PC-3 (cell line): ENCODE measurements at regions of chrX and their contacts with region 1.

Region 1: GRCh38 chrX:104310090-104310489 is 55.4 kb upstream of the ESX1 start:
- DNase-seq: peak; percentile 73
- ATAC-seq: peak; percentile 82
- H3K4me3 ChIP-seq: peak overlapping the region; percentile 56
- H3K27ac ChIP-seq: no peak overlapping the region
- H3K4me1 ChIP-seq: peaks cover 13% of the 10 kb centered on the region
- H3K27me3 ChIP-seq: no peaks in the 10 kb centered on the region
- CTCF ChIP-seq: peak; percentile 72

Region 2: DNA sequence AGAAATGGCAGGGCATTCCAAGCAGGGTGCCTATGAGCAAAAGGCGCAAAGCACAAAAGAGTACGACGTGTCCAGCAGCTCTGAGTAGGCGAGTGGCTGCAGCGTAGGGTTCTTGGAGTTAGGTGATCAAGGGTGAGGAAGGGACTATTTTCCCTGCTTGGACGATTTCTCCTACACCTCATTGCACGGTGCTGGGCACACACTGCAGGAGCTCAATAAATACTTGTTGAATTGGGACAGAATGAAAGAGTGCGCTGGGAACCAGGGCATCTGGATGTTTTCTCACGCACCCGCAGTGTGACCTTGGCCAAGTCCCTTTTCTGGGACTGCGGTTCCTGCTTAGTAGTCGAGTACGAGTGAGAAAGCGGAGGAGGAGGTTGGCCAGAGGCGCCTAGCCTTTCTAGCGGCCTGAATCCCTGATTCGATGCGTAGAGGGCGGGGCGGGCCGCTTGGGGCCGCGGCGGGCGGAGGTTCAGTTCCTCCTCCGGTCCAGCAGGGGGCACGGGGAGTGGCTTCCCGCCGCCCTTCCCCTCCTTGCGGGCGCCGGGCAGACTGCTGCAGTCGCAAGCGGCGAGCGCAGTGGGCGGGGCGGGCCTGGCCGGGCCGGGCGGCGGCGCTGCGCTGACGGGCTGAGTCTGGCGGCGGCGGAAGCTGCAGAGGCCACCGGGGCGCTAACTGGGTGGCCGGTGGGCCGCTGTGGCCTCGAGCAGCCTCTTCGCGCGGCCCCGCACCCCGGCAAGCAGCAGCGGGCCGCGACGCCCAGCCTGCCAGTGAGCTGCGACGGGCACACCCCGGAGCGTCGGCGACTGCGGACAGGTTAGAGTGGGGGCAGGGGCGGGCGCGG is 144.0 kb before region 1 on chrX and contains the start of gene FAM199X:
- CTCF ChIA-PET with region 1: no interaction called
- POLR2A ChIA-PET with region 1: no interaction called
- intact Hi-C with region 1: no loop called
- DNase-seq: peak; percentile 91
- ATAC-seq: peak; percentile 89
- H3K4me3 ChIP-seq: peak within 1 kb of the TSS; percentile 87
- H3K27ac ChIP-seq: peak within 1 kb of the TSS; percentile 60
- H3K4me1 ChIP-seq: peaks cover 18% of the 10 kb centered on the region
- H3K27me3 ChIP-seq: no peaks in the 10 kb centered on the region
- CTCF ChIP-seq: peak; percentile 57
- total RNA-seq, gene FAM199X: 25.9 and 26.0 TPM in 2 replicates

Region 3: GRCh38 chrX:104343428-104344129 is 33.5 kb after region 1 on chrX:
- CTCF ChIA-PET with region 1: no interaction called
- POLR2A ChIA-PET with region 1: no interaction called
- intact Hi-C with region 1: loop called (anchors 1 kb)
- DNase-seq: peak; percentile 94
- ATAC-seq: peak; percentile 93
- H3K4me3 ChIP-seq: no peak overlapping the region
- H3K27ac ChIP-seq: no peak overlapping the region
- H3K4me1 ChIP-seq: peaks cover 17% of the 10 kb centered on the region; the same call in 1 of the 2 replicates
- H3K27me3 ChIP-seq: no peaks in the 10 kb centered on the region
- CTCF ChIP-seq: peak; percentile 74

Region 4: GRCh38 chrX:104432256-104432655 is 122.2 kb after region 1 on chrX:
- CTCF ChIA-PET with region 1: no interaction called
- POLR2A ChIA-PET with region 1: no interaction called
- intact Hi-C with region 1: loop called (anchors 2 kb)
- DNase-seq: peak; percentile 70
- ATAC-seq: peak; percentile 85
- H3K4me3 ChIP-seq: no peak overlapping the region
- H3K27ac ChIP-seq: peak overlapping the region; percentile 73
- H3K4me1 ChIP-seq: peaks cover 32% of the 10 kb centered on the region
- H3K27me3 ChIP-seq: no peaks in the 10 kb centered on the region
- CTCF ChIP-seq: no peak

Region 5: DNA sequence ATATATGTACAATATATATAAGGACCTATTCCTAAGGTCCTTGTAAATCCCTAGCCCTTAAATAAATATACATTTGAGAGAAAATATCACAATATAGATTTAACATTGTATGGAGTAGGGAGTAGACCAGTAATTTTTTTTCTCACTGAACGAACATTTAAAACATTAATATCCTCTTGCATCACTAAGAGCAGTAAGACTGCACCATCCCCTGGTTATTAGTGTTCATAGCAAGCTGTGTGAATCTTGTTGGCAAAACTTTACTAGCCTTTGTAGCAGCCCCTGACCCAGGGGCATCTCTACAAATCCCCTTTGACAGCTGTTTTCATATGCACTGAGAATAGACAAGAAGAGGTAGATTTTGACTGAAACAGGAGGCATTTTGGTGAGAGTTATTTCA is 402.4 kb after region 1 on chrX:
- CTCF ChIA-PET with region 1: no interaction called
- POLR2A ChIA-PET with region 1: no interaction called
- intact Hi-C with region 1: loop called (anchors 1 kb)
- DNase-seq: peak; percentile 40
- ATAC-seq: peak; percentile 54
- H3K4me3 ChIP-seq: no peak overlapping the region
- H3K27ac ChIP-seq: no peak overlapping the region
- H3K4me1 ChIP-seq: peaks cover 15% of the 10 kb centered on the region
- H3K27me3 ChIP-seq: no peaks in the 10 kb centered on the region
- CTCF ChIP-seq: peak; percentile 47

Region 6: DNA sequence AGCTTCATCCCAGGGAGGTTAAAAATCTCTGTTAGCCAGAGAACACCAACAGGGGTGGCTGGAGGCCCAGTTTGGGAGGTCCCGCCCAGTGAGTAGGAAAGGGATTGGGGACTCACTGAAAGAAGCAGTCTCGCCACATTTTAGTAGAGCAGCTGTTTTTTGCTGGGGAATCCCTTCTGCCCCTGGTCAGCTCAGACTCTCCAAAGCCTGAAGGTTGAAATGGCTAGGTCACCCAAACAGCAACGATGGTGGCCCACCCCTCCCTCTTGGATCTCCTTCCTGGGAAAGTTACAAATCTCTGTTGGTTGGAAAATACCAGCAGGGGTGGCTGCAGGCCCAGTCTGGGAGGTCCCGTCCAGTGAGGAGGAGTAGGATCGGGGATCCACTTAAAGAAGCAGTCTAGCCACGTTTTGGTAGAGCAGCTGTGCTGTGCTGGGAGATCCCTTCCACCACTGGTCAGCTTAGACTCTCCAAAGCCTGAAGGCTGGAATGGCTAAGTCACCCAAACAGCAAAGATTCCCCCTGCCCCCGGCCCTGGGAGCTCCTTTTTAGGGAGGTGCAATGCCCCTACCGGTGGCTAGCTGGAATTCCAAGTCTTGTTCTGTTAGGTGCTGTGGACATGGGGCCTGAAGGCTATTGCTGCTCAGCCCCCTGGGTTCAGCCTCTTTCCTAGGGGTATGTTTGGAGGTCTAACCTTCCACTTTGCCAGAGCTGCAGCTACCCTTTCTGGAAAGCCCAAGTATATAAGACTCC is 950.4 kb after region 1 on chrX:
- CTCF ChIA-PET with region 1: no interaction called
- POLR2A ChIA-PET with region 1: no interaction called
- intact Hi-C with region 1: no loop called
- DNase-seq: no peak
- ATAC-seq: no peak
- H3K4me3 ChIP-seq: no peak overlapping the region
- H3K27ac ChIP-seq: no peak overlapping the region
- H3K4me1 ChIP-seq: no peaks in the 10 kb centered on the region
- H3K27me3 ChIP-seq: no peaks in the 10 kb centered on the region
- CTCF ChIP-seq: no peak